Heart right ventricle (tissue), 16 donors: ENCODE measurements at regions of chr7 and their contacts with region 1.

Region 1: DNA sequence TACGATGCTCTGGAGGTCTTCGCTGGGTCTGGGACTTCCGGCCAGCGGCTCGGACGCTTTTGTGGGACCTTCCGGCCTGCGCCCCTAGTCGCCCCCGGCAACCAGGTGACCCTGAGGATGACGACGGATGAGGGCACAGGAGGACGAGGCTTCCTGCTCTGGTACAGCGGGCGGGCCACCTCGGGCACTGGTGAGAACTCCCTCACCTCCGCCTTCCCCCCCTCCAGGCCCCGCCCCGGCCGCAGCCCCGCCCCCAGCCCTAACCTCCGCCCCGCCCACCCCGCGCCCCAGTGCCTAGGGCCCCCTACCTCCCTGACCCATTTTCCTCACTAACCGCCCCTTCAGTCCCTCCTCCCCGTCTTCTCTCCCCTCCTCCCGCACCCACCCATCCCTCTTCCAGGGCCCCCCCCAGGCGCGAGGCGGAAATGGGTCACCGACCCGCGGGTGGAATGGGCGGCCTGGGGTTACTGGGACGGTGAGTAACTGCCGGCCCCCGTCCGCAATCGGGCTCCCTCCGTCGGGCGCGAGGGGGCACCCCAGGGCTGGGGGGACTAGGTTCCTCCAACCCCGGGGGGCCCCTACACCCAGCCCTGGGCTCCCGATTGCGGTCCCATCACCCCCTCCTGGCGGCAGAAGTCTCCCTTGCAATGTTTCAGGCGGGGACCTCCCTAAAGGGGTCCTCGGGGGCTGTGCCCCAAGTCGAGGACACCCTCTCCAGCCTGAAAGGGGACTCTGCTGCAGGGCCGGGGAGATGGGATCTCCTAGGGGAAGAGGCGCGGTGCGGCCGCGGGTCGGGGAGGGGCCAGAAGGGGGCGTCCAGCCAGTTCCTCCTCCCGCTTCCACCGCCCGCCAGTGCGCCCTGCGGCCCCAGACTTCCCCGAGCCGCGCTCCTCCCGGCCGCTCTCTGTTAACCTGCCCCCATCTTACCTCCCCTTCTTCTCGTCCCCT is 2.1 kb downstream of the PCOLCE start:
- DNase-seq: peak; percentile 75 to 86
- ATAC-seq: peak; percentile 76 to 86 (median 82)
- H3K4me3 ChIP-seq: peak overlapping the region; percentile 45 to 86 (median 74)
- H3K27ac ChIP-seq: peak overlapping the region; percentile 35 to 88 (median 80)
- H3K4me1 ChIP-seq: peaks cover 0 to 36% (median 23%) of the 10 kb centered on the region in 9 donors
- H3K27me3 ChIP-seq: peaks cover 0 to 11% (median 0%) of the 10 kb centered on the region in 7 donors
- CTCF ChIP-seq: peak in 8 of 9 donors; percentile 26 to 66 (median 55)

Region 2: DNA sequence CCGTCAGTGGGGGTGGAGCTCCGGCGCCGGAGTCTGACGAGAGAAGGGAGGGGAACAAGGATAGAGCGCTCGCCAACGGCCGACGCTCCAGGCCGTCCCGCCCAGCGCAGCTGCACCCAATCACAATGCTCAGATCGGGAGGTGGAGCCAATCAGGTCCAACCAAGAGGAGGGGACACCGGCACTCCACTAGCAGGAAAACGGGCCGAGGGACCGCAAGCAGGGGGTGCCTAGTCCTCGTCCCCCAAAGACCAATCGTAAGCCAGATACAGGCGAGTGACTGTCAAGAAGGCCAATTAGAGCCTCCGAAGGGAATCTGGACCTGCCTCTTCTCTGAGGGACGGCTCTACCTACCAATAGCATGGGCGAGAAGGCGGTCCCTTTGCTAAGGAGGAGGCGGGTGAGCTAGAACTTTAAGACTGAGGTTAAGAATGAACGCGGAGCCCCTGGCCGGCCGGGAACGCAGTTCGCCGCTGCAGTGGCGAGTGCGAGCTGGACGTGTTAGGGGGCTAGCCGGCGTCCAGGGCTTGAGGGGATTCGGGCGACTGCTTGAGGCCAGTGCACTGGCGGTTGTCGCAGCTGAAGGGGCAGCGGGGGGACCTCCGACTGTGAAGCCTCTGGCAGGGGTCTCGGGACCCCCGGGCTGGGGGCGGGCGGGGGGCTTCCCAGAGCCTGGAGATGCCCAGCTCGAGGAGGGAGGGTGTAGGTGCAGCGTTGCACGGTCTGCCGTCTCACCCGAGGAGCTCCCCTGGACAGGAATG is 17.9 kb before region 1 on chr7 and contains the start of gene FBXO24:
- intact Hi-C with region 1: loop called in 2 of 10 experiments (anchors 2 kb)
- DNase-seq: peak; percentile 100
- ATAC-seq: peak; percentile 91 to 97 (median 94)
- H3K4me3 ChIP-seq: peak within 1 kb of the TSS; percentile 80 to 100 (median 96)
- H3K27ac ChIP-seq: peak within 1 kb of the TSS; percentile 90 to 98 (median 94)
- H3K4me1 ChIP-seq: peaks cover 9 to 67% (median 52%) of the 10 kb centered on the region in 9 donors
- H3K27me3 ChIP-seq: peaks cover 0 to 14% (median 0%) of the 10 kb centered on the region in 7 donors
- CTCF ChIP-seq: peak in 1 of 9 donors; percentile 10
- total RNA-seq, gene FBXO24: 0.15 to 0.66 (median 0.40) TPM in 8 of 10 donors, not detected in the others

Region 3: DNA sequence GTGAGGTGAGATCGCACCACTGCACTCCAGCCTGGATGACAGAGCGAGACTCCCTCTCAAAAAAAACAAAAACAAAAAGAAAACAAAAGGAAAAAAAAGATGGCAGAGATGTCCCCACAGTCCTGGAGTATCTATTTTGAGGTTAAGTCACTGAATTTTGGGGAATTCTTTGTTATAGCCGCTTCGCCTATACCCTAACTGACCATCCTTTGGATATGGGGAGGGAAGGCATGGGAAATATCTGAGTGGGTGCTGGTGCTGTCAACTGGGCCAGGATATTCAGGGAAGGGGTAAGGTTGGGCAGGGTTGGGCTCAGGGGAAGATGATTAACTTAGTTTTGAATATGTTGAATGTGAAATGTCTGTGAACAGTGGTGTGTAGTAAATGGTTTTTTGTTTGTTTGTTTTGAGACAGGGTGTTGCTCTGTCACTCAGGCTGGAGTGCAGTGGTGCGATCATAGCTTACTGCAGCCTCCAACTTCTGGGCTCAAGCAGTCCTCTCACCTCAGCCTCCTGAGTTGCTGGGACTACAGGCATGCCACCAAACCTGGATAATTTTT is 60.9 kb after region 1 on chr7:
- intact Hi-C with region 1: loop called in 2 of 10 experiments (anchors 2 to 5 kb)
- DNase-seq: no peak
- ATAC-seq: no peak
- H3K4me3 ChIP-seq: no peak overlapping the region
- H3K27ac ChIP-seq: no peak overlapping the region
- H3K4me1 ChIP-seq: no peaks in the 10 kb centered on the region
- H3K27me3 ChIP-seq: peaks cover 0 to 20% (median 5%) of the 10 kb centered on the region in 7 donors
- CTCF ChIP-seq: no peak

Region 4: DNA sequence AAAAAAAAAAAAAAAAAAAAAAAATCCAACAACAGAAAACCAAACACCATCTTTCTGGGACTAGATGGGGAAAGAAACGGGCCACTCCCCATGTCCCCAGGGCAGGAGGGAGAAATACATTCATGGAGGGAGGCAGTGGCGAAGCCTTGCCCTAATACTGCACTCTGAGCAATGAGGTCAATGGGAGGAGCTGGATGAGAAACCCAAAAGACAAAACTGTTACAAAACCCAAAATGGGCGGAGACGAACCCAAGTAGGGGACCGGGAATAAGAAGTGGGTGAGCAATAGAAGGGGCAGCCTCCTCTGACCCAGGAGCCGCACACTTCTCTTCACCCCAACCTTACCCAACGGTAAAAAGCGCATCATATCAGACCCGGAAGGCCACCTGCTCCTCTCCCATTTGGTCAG is 75.9 kb after region 1 on chr7:
- intact Hi-C with region 1: loop called in 1 of 10 experiments (anchors 5 kb)
- DNase-seq: peak in 1 of 2 donors; percentile 48
- ATAC-seq: peak in 6 of 8 donors; percentile 7 to 41 (median 21)
- H3K4me3 ChIP-seq: no peak overlapping the region
- H3K27ac ChIP-seq: peak overlapping the region in 5 of 10 donors; percentile 4 to 55 (median 21)
- H3K4me1 ChIP-seq: peaks cover 0 to 49% (median 23%) of the 10 kb centered on the region in 9 donors
- H3K27me3 ChIP-seq: no peaks in the 10 kb centered on the region
- CTCF ChIP-seq: no peak

Region 5: GRCh38 chr7:100863406-100863950 is 259.2 kb after region 1 on chr7:
- intact Hi-C with region 1: no loop called
- DNase-seq: no peak
- ATAC-seq: no peak
- H3K4me3 ChIP-seq: no peak overlapping the region
- H3K27ac ChIP-seq: no peak overlapping the region
- H3K4me1 ChIP-seq: peaks cover 7 to 41% (median 20%) of the 10 kb centered on the region in 9 donors
- H3K27me3 ChIP-seq: no peaks in the 10 kb centered on the region
- CTCF ChIP-seq: no peak